BJ (cell line): ENCODE measurements at regions of chr18 and their contacts with region 1.

Region 1: DNA sequence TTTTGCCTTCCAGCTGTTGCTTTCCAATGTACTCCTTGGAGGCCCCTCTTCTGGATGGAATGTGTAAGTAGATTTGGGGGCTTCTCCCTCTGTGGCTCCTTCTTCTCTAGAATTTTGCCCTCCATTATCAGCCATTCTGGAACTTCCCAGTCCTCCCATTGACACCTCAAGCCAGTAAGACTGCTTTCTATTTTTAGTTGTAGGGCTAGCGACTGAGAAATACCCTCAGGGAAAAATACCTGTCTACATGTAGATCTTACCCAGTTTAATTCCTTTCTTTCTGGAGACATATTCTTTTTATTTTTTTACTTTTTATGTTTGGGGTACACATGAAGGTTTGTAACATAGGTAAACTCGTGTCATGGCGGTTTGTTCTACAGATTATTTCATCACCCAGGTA is 44.3 kb downstream of the SKA1 start:
- DNase-seq: no peak
- H3K4me3 ChIP-seq: no peak overlapping the region
- H3K27me3 ChIP-seq: no peaks in the 10 kb centered on the region
- CTCF ChIP-seq: no peak

Region 2: DNA sequence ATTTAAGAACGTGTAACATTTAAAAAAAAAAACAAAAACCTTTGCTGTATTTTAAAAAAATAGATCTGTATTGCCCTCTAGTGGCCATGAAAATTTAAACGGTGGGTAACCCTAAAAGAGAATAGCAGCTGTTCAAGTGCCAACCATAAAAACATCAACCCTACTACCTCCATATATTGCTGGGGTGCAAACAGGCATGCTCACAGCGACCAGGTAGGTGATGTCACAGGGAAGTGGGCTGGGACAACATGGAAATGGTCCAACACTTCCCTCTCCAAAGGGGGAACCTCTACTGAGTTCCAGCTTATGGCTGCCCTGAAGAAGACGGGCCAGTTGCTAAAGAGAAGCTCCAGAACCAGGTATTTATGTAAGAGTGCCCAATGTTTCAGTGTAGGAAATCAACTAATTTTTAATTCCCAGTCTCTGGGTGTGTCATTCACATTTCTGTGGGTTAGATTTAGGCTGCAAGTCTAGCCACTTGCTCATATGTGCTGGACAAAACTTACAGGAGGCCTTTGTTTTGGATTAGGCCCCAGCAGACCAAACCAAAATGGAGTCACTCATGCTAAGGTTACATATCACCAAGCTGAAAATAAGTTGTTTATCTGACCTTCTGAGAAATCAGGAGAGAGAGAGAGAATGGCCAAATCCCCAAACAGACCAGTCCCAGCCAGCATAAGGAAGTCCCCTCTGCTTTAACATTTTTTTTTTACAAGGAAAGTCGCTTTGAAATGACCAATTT is 10.2 kb after region 1 on chr18:
- CTCF ChIA-PET with region 1: interaction called, 16 read pairs
- POLR2A ChIA-PET with region 1: no interaction called
- DNase-seq: no peak
- H3K4me3 ChIP-seq: no peak overlapping the region
- H3K27me3 ChIP-seq: no peaks in the 10 kb centered on the region
- CTCF ChIP-seq: peak; percentile 44

Region 3: DNA sequence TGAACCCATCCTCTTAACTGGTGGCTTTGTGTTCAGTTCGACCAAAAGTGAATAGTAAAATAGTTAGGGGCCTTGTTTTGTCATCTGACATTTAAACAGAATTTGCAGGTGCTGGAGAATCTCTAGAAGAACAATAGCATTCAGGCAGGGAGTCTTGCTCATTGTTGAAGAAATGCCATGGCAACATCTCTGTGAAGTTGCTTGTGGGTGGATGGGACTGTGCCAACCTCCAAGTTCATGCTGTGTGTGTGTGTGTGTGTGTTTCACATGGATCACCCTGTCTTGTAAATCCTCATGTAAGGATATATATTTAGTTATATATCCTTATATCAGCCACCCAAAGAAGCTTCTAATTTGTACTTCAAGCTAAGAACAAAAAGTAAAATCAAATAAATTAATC is 22.4 kb after region 1 on chr18:
- CTCF ChIA-PET with region 1: no interaction called
- POLR2A ChIA-PET with region 1: no interaction called
- DNase-seq: no peak
- H3K4me3 ChIP-seq: no peak overlapping the region
- H3K27me3 ChIP-seq: no peaks in the 10 kb centered on the region
- CTCF ChIP-seq: no peak